Activated B cell treated with CpG ODN at 0.5 μM for 24 hours (primary cell): ENCODE measurements at regions of chr7 and their contacts with region 1.

Region 1: DNA sequence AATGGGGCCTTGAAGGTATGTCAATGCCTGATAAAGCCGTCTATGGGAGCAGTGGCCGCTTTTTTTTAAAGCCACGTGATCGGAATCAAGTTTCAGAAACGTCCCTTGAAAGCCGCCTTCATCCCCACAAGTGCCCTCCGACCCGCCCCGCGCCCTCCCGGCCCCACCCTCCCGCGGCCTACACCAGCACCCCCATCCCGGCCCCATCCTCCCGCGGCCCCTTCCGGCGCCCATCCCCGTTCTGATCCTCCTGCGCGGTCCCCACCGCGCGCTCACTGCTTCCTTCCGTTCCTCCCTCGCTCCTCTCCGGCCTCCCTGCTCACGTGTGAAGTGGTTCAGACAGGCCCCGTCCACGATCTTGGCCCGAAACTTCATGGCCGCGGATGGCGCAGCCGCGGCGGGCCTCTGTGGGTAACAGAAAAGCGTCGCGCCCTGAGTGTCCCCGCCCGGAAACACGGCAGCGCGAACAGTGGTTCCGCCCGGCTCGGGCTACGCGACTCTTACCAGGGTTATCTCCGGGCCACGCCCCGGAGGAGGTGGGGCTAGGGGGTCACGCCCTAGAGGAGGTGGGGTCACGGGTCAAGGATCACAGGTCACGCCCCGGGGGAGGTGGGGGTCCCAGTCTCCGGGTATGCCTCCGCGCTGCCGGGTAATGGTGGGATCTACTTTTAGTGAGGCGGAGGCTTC is at the start of gene HUS1:
- DNase-seq: peak; percentile 84
- ATAC-seq: peak; percentile 97
- H3K4me3 Mint-ChIP-seq: peak within 1 kb of the TSS; percentile 99
- H3K27ac Mint-ChIP-seq: peak within 1 kb of the TSS; percentile 99
- H3K4me1 Mint-ChIP-seq: peaks cover 28% of the 10 kb centered on the region
- H3K27me3 Mint-ChIP-seq: no peaks in the 10 kb centered on the region
- CTCF ChIP-seq: no peak
- total RNA-seq, gene HUS1: 37.3 and 42.5 TPM in 2 replicates

Region 2: DNA sequence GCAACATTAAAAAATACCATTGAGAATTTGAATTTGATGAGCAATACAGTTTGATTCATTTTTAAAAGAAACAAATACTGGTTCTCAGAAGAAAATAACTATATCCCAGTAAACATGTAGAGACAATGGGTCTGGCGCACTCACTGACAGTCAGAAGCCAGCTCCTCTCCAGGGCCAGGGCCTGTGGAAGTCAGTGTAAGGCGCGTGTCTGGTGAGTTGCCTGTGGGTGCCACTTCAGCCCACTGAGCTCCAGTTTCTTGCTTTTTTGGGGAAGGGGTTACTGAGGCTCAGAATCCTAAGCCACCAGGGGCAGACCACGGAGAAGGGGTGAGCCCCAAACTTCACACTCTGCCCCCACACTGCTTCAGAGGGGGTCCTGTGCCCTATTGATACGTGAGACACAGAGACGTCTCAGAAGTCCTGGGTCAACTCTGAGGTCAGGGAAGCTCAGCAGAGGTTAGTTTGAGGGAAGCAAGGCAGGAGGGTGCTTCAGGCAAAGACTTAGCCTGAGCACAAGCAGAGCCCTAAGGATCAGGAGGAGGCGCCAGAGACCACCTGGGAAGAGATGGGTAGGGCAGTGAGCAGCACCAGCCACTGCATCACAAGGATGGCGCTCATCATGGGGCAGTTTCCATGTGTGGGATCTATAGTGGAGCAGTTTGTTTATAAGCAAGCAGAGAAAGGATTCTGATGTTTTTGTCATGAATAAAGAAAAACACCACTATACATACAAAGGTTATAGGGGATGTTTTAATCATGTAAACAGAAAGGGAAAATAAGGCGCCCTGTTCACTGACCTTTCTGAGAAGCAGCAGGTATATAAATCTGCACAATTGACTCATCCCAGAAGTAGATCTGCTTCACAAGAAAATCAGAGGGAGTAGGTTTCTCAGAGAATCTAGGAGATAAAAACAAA is 126.7 kb before region 1 on chr7:
- CTCF ChIA-PET with region 1: no interaction called
- POLR2A ChIA-PET with region 1: no interaction called
- intact Hi-C with region 1: no loop called
- DNase-seq: no peak
- ATAC-seq: peak; percentile 40
- H3K4me3 Mint-ChIP-seq: no peak overlapping the region
- H3K27ac Mint-ChIP-seq: no peak overlapping the region
- H3K4me1 Mint-ChIP-seq: no peaks in the 10 kb centered on the region
- H3K27me3 Mint-ChIP-seq: no peaks in the 10 kb centered on the region
- CTCF ChIP-seq: no peak

Region 3: DNA sequence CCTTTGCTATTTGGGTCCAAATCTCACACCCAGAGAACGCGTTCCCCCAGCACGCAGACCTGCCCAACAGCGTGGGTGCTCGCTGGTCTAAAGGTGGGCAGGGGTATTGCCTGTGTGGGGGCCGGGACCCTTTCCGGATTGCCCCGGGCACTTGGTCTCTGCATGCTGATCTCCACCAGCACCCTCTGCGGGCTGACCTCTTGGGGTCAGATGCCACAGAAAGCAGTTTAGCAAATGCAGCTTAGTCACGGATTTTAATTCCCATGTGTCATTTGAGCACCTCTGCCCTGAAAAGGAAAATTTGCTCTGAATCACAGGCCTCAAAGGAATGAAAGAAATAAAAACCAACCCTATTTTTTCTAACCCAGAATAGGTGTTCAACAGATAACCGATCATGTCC is 77.7 kb before region 1 on chr7:
- CTCF ChIA-PET with region 1: no interaction called
- POLR2A ChIA-PET with region 1: no interaction called
- intact Hi-C with region 1: no loop called
- DNase-seq: no peak
- ATAC-seq: no peak
- H3K4me3 Mint-ChIP-seq: no peak overlapping the region
- H3K27ac Mint-ChIP-seq: no peak overlapping the region
- H3K4me1 Mint-ChIP-seq: no peaks in the 10 kb centered on the region
- H3K27me3 Mint-ChIP-seq: peaks cover under 1% of the 10 kb centered on the region
- CTCF ChIP-seq: no peak

Region 4: DNA sequence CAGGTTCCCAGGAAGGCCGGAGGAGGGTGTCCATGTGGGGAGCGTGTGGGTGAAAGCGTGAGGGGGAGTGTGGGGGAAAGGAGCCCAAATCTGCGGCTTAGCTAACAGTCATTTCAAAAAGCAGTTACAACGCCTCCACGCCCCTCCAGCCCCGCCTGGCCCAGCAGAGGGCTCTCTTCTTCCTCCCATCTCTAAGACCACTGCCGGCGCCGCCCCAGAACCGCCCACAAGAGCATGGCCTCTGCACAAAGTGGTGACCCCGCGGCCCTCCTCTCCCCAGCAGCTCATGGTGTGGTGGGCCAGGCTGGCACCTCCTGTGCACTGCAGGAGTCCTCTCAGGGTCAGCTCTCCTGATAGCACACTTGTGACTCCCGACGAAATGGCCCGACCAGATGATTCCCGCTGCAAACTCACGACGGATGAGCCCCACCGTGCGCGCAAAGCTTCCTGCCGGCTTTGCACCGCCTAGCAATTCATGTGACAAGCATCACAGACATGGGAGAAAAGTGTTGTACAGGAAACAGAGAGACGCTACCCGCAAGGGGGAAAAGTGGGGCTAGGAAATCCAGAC is 12.5 kb after region 1 on chr7:
- CTCF ChIA-PET with region 1: interaction called, 10 read pairs
- POLR2A ChIA-PET with region 1: interaction called, 3 read pairs
- intact Hi-C with region 1: loop called (anchors 1 kb)
- DNase-seq: peak; percentile 78
- ATAC-seq: peak; percentile 98
- H3K4me3 Mint-ChIP-seq: peak overlapping the region; percentile 97
- H3K27ac Mint-ChIP-seq: peak overlapping the region; percentile 82
- H3K4me1 Mint-ChIP-seq: peaks cover 14% of the 10 kb centered on the region
- H3K27me3 Mint-ChIP-seq: no peaks in the 10 kb centered on the region
- CTCF ChIP-seq: peak; percentile 40

Region 5: GRCh38 chr7:48035301-48035966 is 56.1 kb after region 1 on chr7 and contains the start of gene C7orf57:
- CTCF ChIA-PET with region 1: no interaction called
- POLR2A ChIA-PET with region 1: no interaction called
- intact Hi-C with region 1: loop called (anchors 5 kb)
- DNase-seq: peak; percentile 75
- ATAC-seq: peak; percentile 97
- H3K4me3 Mint-ChIP-seq: peak within 1 kb of the TSS; percentile 73
- H3K27ac Mint-ChIP-seq: no peak within 1 kb of the TSS
- H3K4me1 Mint-ChIP-seq: peaks cover 13% of the 10 kb centered on the region
- H3K27me3 Mint-ChIP-seq: peaks cover 25% of the 10 kb centered on the region
- CTCF ChIP-seq: no peak
- total RNA-seq, gene C7orf57: not detected in 2 replicates